ENCODE measurements at regions of chr7 and their contacts with region 1.

Region 1: DNA sequence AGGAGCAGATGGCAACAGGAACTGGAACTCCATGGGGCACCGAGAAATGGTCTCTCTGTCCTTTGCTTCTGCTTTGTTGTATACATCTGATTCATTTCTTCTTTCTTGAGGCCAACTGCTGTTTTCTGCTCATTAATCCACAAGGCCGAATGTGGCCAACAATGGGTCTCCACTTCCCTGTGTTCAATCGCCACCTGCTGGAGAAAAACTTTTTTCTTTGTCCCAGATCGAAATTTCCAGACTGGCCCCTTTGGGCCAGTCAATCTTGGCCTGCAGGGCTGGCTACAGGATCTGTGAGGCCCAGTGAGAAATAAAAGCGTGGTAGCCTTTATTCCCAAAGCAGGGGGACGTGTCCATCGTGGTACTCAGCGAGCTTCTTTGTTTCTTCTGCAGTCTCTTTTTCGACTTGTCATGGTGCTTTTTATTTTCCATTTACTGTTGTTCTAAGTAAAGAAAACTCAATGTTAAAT is 58.8 kb downstream of the PARP12 start:
- DNase-seq: peak in 1 of 2 donors; percentile 55
- H3K4me3 ChIP-seq: no peak overlapping the region
- H3K27ac ChIP-seq: no peak overlapping the region
- H3K4me1 ChIP-seq: no peaks in the 10 kb centered on the region
- H3K27me3 ChIP-seq: no peaks in the 10 kb centered on the region
- CTCF ChIP-seq: peak; percentile 18 to 24

Region 2: DNA sequence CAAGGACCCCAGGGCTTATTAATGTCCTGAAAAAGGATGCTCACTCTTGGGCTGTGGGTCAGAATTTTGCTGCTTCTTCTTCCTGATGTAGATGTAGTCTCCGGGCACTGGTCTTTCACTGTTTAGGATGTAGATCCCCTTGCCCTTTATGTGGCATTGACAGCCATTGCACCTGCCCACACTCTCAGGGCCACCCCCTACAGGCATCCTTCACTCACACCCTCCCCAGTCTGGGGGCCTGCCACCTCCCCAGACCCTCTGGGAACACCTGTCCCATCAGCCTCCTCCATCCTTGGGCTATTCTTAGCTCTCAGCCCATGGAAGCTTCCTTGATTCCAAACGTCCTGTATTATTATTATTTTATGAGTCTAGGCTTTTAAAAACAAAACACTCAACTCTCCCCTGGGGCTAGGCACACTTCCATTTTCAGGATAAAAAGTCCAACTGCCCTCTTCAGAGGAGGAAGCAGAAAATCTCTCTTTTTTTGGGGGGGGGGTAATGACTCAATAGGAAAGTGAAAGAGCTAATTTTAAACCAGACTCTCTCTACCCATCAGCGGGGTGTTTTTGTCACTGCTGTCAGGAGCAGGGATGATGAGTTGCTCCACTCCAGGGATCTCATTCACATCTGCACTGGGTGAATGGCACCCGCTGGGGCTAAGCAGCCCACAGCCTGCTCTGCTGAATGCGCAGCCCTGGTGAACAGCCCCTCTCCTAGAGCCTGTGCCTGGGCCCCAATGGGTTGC is 508.9 kb before region 1 on chr7:
- intact Hi-C with region 1: loop called (anchors 10 kb)
- DNase-seq: no peak
- H3K4me3 ChIP-seq: no peak overlapping the region
- H3K27ac ChIP-seq: no peak overlapping the region
- H3K4me1 ChIP-seq: peaks cover 0 to 14% (median 7%) of the 10 kb centered on the region in 4 donors
- H3K27me3 ChIP-seq: peaks cover 0 to under 1% of the 10 kb centered on the region in 2 donors
- CTCF ChIP-seq: no peak

Region 3: GRCh38 chr7:139618482-139619366 is 385.2 kb before region 1 on chr7:
- intact Hi-C with region 1: loop called (anchors 10 kb)
- DNase-seq: no peak
- H3K4me3 ChIP-seq: no peak overlapping the region
- H3K27ac ChIP-seq: no peak overlapping the region
- H3K4me1 ChIP-seq: no peaks in the 10 kb centered on the region
- H3K27me3 ChIP-seq: no peaks in the 10 kb centered on the region
- CTCF ChIP-seq: peak; percentile 32 to 41

Region 4: GRCh38 chr7:139648941-139649425 is 355.0 kb before region 1 on chr7:
- intact Hi-C with region 1: loop called (anchors 2 kb)
- DNase-seq: no peak
- H3K4me3 ChIP-seq: no peak overlapping the region
- H3K27ac ChIP-seq: peak overlapping the region in 1 of 2 donors; percentile 18
- H3K4me1 ChIP-seq: peaks cover 0 to 28% (median 12%) of the 10 kb centered on the region in 4 donors
- H3K27me3 ChIP-seq: no peaks in the 10 kb centered on the region
- CTCF ChIP-seq: no peak

Region 5: DNA sequence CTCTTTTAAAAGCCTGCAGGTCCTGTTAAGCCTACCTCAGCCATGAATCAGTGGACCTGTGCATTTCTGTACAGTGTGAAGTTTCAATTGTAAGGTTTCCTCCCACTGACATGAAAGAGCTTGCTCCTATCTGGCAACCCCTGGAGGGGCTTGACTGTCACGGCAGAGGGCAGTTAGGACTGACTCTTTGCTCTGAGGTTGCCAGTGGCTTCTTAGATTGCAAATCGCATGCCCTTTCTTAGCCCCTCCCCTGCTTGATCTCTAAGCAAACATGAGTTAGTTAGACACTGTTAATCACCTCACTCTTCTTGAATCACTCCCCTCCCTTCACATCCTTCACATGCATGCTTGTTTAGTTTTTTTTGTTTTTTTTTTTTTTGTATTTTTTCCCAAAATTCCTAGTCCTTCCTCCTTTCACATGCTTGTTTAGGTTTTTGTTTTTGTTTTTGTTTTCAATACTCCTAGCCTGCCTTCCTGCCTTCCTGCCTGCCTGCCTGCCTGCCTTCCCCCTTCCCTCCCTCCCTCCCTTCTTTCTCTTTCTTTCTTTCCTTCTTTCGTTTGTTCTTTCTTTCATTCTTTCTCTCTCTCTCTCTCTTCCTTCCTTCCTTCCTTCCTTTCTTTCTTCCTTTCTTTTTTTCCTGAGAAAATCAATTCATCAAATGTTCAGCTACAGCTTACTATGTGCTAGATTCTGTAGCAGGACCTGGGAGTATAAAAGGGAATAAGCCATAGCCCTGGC is 220.1 kb before region 1 on chr7:
- intact Hi-C with region 1: loop called (anchors 10 kb)
- DNase-seq: no peak
- H3K4me3 ChIP-seq: no peak overlapping the region
- H3K27ac ChIP-seq: no peak overlapping the region
- H3K4me1 ChIP-seq: peaks cover 0 to 10% (median 5%) of the 10 kb centered on the region in 4 donors
- H3K27me3 ChIP-seq: no peaks in the 10 kb centered on the region
- CTCF ChIP-seq: no peak

Region 6: GRCh38 chr7:140192620-140193019 is 188.7 kb after region 1 on chr7:
- intact Hi-C with region 1: no loop called
- DNase-seq: no peak
- H3K4me3 ChIP-seq: no peak overlapping the region
- H3K27ac ChIP-seq: no peak overlapping the region
- H3K4me1 ChIP-seq: no peaks in the 10 kb centered on the region
- H3K27me3 ChIP-seq: peaks cover 0 to 2% of the 10 kb centered on the region in 2 donors
- CTCF ChIP-seq: no peak